Right ventricle myocardium inferior (tissue), 1 donor: ENCODE measurements at regions of chr6 and their contacts with region 1.

Region 1: DNA sequence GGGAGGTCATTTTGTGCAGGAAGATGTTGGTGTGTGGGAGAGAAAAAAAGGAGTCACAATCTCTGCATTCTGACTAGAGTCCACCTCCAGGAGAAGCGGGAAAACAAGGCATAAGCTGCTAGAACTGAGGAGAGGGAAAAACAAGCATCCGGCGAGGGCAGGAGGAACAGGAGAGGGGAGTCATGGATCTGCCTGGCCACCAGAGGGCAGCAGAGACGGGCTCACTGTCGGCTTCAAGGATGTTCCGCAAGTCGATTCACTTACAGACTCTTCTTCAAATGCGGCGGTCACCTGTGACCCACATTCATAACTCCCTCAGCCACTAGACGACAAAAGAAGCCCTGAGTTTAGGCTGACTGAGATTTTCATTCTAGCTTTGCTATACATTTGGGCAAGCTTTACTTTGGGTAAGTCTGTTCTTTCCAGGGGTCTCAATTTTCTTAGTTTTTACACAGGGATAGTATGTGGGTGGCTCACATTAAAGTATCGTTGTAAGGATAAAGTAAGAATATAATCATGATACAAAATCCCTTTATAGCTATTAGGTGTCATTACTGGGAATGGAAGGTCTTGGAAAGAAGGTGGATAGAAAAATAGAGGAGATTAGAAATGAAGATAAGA is 6.6 kb upstream of the BTNL2 start:
- DNase-seq: peak; percentile 81
- ATAC-seq: peak; percentile 73

Region 2: GRCh38 chr6:32244946-32245398 is 168.6 kb before region 1 on chr6:
- intact Hi-C with region 1: loop called (anchors 5 kb)
- DNase-seq: peak; percentile 84
- ATAC-seq: peak; percentile 86

Region 3: GRCh38 chr6:32700391-32701040 is 287.0 kb after region 1 on chr6:
- intact Hi-C with region 1: loop called (anchors 1 kb)
- DNase-seq: no peak
- ATAC-seq: peak; percentile 68

Region 4: GRCh38 chr6:32796848-32797776 is 383.6 kb after region 1 on chr6:
- intact Hi-C with region 1: loop called (anchors 2 kb)
- DNase-seq: peak; percentile 85
- ATAC-seq: peak; percentile 67

Region 5: GRCh38 chr6:32868257-32868788 is 454.8 kb after region 1 on chr6:
- intact Hi-C with region 1: loop called (anchors 2 kb)
- DNase-seq: no peak
- ATAC-seq: peak; percentile 67